Ovary (tissue), 10 donors: ENCODE measurements at regions of chr17 and their contacts with region 1.

Region 1: DNA sequence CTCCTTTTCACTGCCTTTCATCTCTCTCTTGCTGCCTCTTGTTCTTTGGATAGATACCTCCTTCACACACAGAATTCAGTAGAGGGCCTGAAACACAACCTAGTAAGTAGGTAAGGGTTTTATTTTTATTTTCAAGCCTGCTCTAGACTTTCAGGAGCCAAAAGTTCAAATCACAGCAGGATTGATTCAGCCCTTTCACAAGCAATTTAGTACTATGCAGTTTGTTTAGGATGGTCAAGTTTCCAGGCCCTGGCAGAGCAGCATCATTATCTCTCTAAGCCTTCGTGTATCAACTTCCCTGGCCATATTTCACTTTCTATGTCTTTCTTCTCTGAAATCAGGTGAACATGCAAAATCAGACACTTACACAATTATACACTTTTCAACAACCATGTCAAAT is 148.8 kb upstream of the CORO6 start:
- DNase-seq: no peak
- H3K4me3 ChIP-seq: no peak overlapping the region
- H3K27ac ChIP-seq: no peak overlapping the region
- H3K4me1 ChIP-seq: no peaks in the 10 kb centered on the region
- H3K27me3 ChIP-seq: no peaks in the 10 kb centered on the region
- CTCF ChIP-seq: no peak
- EP300 ChIP-seq: no peak
- POLR2A ChIP-seq: no peak

Region 2: GRCh38 chr17:29622337-29623282 is 148.9 kb before region 1 on chr17 and contains the start of gene CORO6:
- intact Hi-C with region 1: loop called in 1 of 4 experiments (anchors 10 kb)
- DNase-seq: peak; percentile 44 to 80 (median 69)
- H3K4me3 ChIP-seq: peak within 1 kb of the TSS; percentile 50
- H3K27ac ChIP-seq: no peak within 1 kb of the TSS
- H3K4me1 ChIP-seq: peaks cover 2% of the 10 kb centered on the region
- H3K27me3 ChIP-seq: no peaks in the 10 kb centered on the region
- CTCF ChIP-seq: no peak
- EP300 ChIP-seq: no peak
- POLR2A ChIP-seq: no peak
- total RNA-seq, gene CORO6: 1.2 to 9.0 (median 3.5) TPM

Region 3: DNA sequence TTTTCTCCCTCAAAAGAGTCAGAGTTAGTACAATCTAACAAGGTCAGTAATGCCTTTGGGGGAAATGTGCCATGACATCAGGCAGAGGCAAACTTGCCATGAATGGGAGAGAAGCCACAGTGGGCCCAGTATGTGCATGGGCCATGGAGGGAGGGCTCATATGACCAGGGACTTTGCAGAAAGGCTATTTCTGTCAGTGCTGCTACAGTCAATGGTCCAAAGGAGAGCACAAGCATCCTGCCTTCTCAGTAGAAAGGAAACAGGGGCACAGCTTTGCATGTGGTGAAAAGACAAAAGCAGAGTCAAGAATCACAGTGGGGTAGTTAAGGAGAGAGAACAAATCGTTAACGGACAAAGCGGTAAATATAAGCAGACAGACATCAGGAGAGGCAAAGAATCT is 137.7 kb before region 1 on chr17:
- intact Hi-C with region 1: loop called in 2 of 4 experiments (anchors 10 kb)
- DNase-seq: no peak
- H3K4me3 ChIP-seq: no peak overlapping the region
- H3K27ac ChIP-seq: no peak overlapping the region
- H3K4me1 ChIP-seq: no peaks in the 10 kb centered on the region
- H3K27me3 ChIP-seq: no peaks in the 10 kb centered on the region
- CTCF ChIP-seq: no peak
- EP300 ChIP-seq: no peak
- POLR2A ChIP-seq: no peak

Region 4: DNA sequence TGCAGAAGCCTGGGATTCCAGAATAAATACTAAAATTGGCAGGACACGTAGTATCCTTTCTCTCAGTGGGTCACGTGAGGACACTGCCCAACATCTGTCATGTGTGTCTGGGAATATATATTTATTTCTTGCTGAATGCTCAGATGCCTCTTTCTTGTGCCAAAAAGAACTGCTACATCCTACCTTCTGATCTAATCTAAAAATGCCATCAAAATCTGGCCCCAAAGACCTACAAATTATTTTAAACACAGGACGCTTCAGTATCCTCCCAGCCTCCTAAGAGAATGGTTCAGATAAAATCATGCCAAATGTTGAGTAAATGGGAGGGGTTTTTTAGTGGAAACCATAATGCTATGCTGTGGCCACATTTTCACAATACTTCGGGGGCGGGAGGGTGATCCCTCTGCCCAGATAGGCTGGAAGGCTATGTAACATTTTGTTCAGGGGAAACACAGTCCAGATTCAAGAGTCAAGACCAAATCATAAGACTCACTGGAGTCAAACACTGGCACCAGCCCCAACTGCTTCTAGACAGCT is 126.0 kb before region 1 on chr17:
- intact Hi-C with region 1: loop called in 1 of 4 experiments (anchors 10 kb)
- DNase-seq: peak; percentile 42 to 87 (median 69)
- H3K4me3 ChIP-seq: no peak overlapping the region
- H3K27ac ChIP-seq: peak overlapping the region; percentile 13 to 51
- H3K4me1 ChIP-seq: peaks cover 7% of the 10 kb centered on the region
- H3K27me3 ChIP-seq: no peaks in the 10 kb centered on the region
- CTCF ChIP-seq: no peak
- EP300 ChIP-seq: no peak
- POLR2A ChIP-seq: no peak

Region 5: GRCh38 chr17:29825604-29826003 is 54.1 kb after region 1 on chr17:
- intact Hi-C with region 1: no loop called
- DNase-seq: no peak
- H3K4me3 ChIP-seq: no peak overlapping the region
- H3K27ac ChIP-seq: no peak overlapping the region
- H3K4me1 ChIP-seq: no peaks in the 10 kb centered on the region
- H3K27me3 ChIP-seq: no peaks in the 10 kb centered on the region
- CTCF ChIP-seq: no peak
- EP300 ChIP-seq: no peak
- POLR2A ChIP-seq: no peak